Mammary epithelial cell (primary cell): ENCODE measurements at regions of chr13 and their contacts with region 1.

Region 1: DNA sequence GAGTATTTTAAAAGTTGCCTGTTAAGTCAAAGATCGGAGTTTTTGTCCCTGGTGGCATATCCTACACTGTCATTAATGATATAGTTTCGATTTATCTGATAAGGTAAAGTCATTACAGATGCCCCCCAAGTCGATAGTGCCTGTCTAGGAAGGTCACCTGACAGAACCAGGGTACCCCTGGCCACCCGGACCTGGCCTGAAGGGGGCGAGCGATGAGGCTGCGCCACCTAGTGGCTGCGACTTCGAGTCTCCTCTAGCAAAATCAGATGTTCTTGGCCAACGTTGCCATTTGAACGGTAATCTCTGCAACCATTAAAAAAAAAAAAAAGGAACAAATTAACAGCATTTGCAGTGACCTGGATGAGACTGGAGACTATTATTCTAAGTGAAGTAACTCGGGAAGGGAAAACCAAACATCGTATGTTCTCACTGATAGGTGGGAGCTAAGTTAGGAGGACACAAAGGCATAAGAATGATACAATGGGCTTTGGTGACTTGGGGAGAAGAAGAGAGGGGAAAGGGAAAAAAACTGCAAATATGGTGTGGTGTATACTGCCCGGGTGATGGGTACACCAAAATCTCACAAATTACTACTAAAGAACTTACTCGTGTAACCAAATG is 565.1 kb downstream of the LIG4 start:
- DNase-seq: peak; percentile 1
- H3K4me3 ChIP-seq: no peak overlapping the region
- H3K27ac ChIP-seq: no peak overlapping the region
- H3K4me1 ChIP-seq: no peaks in the 10 kb centered on the region
- H3K27me3 ChIP-seq: no peaks in the 10 kb centered on the region
- CTCF ChIP-seq: peak; percentile 62 to 92

Region 2: GRCh38 chr13:107205303-107206104 is 444.7 kb before region 1 on chr13:
- CTCF ChIA-PET with region 1: interaction called, 3 read pairs
- dilution Hi-C with region 1: no loop called
- in situ Hi-C with region 1: loop called in 1 of 2 experiments (anchors 25 kb)
- intact Hi-C with region 1: loop called (anchors 5 kb)
- DNase-seq: peak; percentile 19
- H3K4me3 ChIP-seq: no peak overlapping the region
- H3K27ac ChIP-seq: no peak overlapping the region
- H3K4me1 ChIP-seq: peaks cover 2% of the 10 kb centered on the region
- H3K27me3 ChIP-seq: no peaks in the 10 kb centered on the region
- CTCF ChIP-seq: peak; percentile 93 to 96

Region 3: GRCh38 chr13:107211073-107211472 is 439.1 kb before region 1 on chr13:
- CTCF ChIA-PET with region 1: no interaction called
- dilution Hi-C with region 1: no loop called
- in situ Hi-C with region 1: loop called in 1 of 2 experiments (anchors 25 kb)
- intact Hi-C with region 1: loop called (anchors 5 kb)
- DNase-seq: peak; percentile 59
- H3K4me3 ChIP-seq: no peak overlapping the region
- H3K27ac ChIP-seq: no peak overlapping the region
- H3K4me1 ChIP-seq: no peaks in the 10 kb centered on the region
- H3K27me3 ChIP-seq: no peaks in the 10 kb centered on the region
- CTCF ChIP-seq: peak; percentile 93 to 95

Region 4: DNA sequence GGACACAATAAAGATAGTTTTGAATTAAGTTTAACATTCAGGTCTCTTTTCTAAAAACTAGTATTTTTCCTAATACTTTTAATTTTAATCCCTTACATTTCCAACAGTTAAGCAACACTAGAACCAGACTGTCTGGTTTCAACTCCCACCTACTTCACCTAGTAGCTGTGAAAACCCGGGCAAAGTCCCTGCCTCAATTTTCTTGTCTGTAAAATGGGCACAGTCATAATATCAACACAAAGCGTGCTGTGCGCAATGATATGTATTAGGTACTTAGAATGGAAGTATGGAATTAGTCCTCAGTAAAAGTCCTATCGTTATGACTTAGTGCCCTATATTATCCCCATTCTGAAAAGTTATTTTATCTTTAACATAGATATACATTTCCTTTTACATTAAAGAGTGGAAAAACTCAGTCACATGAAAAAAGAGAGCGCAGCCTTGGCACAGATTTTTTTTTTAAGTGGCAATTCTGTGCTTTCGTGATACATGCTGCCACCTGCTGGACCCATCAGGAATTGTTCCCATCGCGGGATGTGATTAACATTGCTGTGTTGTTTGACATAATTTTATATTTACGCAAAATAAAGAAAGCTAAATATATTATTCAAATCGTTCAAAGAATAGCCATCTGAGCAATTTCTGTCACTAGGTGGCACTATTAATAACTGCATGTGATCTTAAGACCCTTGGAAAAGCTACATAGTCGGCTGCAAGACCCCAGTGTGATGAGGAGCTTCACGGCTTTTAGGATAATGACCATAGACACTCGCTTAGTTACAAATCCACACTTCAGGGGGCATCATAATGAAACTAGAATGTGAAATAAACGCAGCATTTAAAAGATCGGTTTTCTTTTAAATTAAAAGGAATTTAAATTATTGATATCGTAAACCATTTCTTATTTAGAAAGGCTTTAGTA is 505.3 kb after region 1 on chr13:
- CTCF ChIA-PET with region 1: interaction called, 12 read pairs
- dilution Hi-C with region 1: no loop called
- in situ Hi-C with region 1: no loop called
- intact Hi-C with region 1: no loop called
- DNase-seq: peak; percentile 20
- H3K4me3 ChIP-seq: no peak overlapping the region
- H3K27ac ChIP-seq: no peak overlapping the region
- H3K4me1 ChIP-seq: no peaks in the 10 kb centered on the region
- H3K27me3 ChIP-seq: no peaks in the 10 kb centered on the region
- CTCF ChIP-seq: peak; percentile 79 to 85